ENCODE measurements at regions of chr1 and their contacts with region 1.

Region 1: GRCh38 chr1:999725-1000356 is at the start of gene HES4:
- DNase-seq: peak; percentile 84
- ATAC-seq: peak; percentile 56
- H3K4me3 ChIP-seq: peak within 1 kb of the TSS in 4 of 5 experiments; percentile 38 to 60 (median 51)
- H3K4me3 Mint-ChIP-seq: peak within 1 kb of the TSS; percentile 83
- H3K27ac ChIP-seq: peak within 1 kb of the TSS in 1 of 2 donors; percentile 30
- H3K27ac Mint-ChIP-seq: peak within 1 kb of the TSS; percentile 63
- H3K4me1 ChIP-seq: peaks cover 36 to 51% of the 10 kb centered on the region in 2 donors
- H3K4me1 Mint-ChIP-seq: peaks cover 19% of the 10 kb centered on the region
- H3K27me3 ChIP-seq: peaks cover 0 to 75% (median 43%) of the 10 kb centered on the region in 4 experiments
- H3K27me3 Mint-ChIP-seq: peaks cover 28% of the 10 kb centered on the region
- CTCF ChIP-seq: no peak
- total RNA-seq, gene HES4: 3.2 and 4.3 TPM in 2 replicates

Region 2: DNA sequence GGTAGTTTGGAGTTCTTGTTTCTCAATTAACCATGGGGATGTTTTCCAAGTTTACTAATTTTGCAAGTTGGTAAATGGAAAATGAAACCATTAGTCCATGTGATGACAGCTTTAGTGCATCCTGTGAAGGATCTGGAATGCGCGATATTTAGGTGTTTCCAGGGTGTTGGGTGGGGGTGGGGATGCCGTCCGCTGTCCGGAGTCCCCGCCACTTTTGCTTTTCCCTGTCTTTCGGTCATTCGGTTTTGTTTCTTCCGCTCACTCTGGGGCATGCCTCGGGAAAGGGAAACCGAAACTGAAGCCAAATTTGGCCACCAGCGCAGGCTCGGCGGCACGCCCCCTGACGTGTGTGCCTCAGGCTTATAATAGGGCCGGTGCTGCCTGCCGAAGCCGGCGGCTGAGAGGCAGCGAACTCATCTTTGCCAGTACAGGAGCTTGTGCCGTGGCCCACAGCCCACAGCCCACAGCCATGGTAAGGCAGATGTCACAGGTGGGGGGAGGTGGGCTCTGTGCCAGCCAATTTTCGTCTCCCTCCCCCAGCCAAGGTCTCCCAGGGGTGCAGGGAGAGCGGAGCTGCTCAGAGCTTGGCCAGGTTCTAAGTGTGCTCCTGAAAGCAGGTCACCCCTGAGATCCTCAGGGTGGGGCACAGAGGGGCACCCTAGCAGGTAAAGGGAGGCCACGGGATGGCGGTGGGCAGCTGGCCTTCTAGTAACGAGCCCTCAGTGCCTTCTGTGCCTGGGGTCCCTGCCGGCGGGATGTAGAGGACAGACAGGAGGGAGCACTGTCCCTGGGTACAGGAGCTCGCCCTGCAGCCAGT is 13.5 kb after region 1 on chr1 and contains the start of gene ISG15:
- CTCF ChIA-PET with region 1: interaction called, 14 read pairs
- POLR2A ChIA-PET with region 1: interaction called, 9 read pairs
- intact Hi-C with region 1: loop called (anchors 2 kb)
- DNase-seq: peak; percentile 91
- ATAC-seq: peak; percentile 96
- H3K4me3 ChIP-seq: peak within 1 kb of the TSS; percentile 68 to 94 (median 75)
- H3K4me3 Mint-ChIP-seq: peak within 1 kb of the TSS; percentile 95
- H3K27ac ChIP-seq: peak within 1 kb of the TSS; percentile 88 to 93
- H3K27ac Mint-ChIP-seq: peak within 1 kb of the TSS; percentile 98
- H3K4me1 ChIP-seq: peaks cover 16 to 23% of the 10 kb centered on the region in 2 donors
- H3K4me1 Mint-ChIP-seq: peaks cover 27% of the 10 kb centered on the region
- H3K27me3 ChIP-seq: no peaks in the 10 kb centered on the region
- H3K27me3 Mint-ChIP-seq: peaks cover 6% of the 10 kb centered on the region
- CTCF ChIP-seq: no peak
- total RNA-seq, gene ISG15: 25.2 and 28.3 TPM in 2 replicates

Region 3: GRCh38 chr1:1019122-1019999 is 19.5 kb after region 1 on chr1:
- CTCF ChIA-PET with region 1: interaction called, 14 read pairs
- POLR2A ChIA-PET with region 1: no interaction called
- intact Hi-C with region 1: loop called (anchors 2 kb)
- DNase-seq: peak; percentile 89
- ATAC-seq: peak; percentile 91
- H3K4me3 ChIP-seq: peak overlapping the region in 4 of 5 experiments; percentile 13 to 53 (median 44)
- H3K4me3 Mint-ChIP-seq: peak overlapping the region; percentile 73
- H3K27ac ChIP-seq: no peak overlapping the region
- H3K27ac Mint-ChIP-seq: peak overlapping the region; percentile 67
- H3K4me1 ChIP-seq: peaks cover 10 to 28% of the 10 kb centered on the region in 2 donors
- H3K4me1 Mint-ChIP-seq: peaks cover 9% of the 10 kb centered on the region
- H3K27me3 ChIP-seq: peaks cover 0 to 20% (median 6%) of the 10 kb centered on the region in 4 experiments
- H3K27me3 Mint-ChIP-seq: no peaks in the 10 kb centered on the region
- CTCF ChIP-seq: peak; percentile 47